ENCODE measurements at regions of chr16 and their contacts with region 1.

Region 1: DNA sequence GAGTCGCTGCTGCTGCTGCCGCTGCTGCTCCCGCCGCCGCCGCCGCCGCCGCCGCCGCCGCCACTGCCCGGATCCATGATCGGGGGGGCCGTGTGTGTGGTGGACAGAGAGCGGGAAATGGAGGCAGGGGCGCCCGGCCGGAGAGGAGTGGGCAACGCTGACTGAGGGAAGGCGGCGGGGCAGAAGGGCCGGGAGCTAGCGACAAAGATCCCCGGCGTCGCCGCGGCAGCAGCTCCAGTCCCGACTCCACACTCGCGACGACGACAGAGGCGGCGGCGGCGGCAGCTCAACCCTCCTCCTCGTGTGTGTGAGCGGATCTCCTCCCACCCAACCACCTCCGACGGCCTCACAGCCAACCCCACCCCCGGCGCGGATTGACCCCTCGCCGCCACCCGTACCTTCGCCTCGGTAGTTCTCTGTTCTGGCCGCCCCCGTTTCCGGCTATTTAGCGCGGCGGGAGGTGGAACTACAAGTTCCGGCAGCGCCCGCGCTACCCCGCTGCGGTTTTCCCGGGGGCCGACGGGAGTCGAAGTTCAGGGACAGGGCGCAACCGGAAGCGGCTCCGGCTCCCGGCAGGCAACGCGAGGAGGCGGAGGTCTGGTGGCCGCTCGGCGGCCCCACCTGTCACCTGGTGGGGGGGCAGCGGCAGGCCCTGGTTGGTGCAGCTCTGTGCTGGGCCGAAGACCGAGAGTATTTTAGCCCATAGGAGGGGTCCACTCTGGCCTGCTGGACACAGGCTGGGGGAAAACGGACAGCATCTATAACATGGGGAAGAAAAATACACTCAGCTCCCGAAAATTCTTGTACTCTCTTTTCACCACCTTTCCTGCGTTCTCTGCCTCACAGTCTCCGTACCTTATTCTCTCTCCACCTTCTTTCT is at the start of gene GSPT1:
- DNase-seq: peak; percentile 99
- ATAC-seq: peak; percentile 98
- total RNA-seq, gene GSPT1: 87.5 to 111 TPM

Region 2: GRCh38 chr16:11459722-11460121 is 456.2 kb before region 1 on chr16:
- intact Hi-C with region 1: no loop called
- DNase-seq: no peak
- ATAC-seq: no peak

Region 3: GRCh38 chr16:11783319-11784037 is 132.4 kb before region 1 on chr16:
- intact Hi-C with region 1: no loop called
- DNase-seq: no peak
- ATAC-seq: peak; percentile 39 to 54

Region 4: GRCh38 chr16:11851294-11852091 is 64.4 kb before region 1 on chr16 and contains the start of gene RSL1D1:
- intact Hi-C with region 1: loop called in 1 of 2 experiments (anchors 10 kb)
- DNase-seq: peak; percentile 92
- ATAC-seq: peak; percentile 99 to 100
- total RNA-seq, gene RSL1D1: 98.4 to 113 TPM

Region 5: DNA sequence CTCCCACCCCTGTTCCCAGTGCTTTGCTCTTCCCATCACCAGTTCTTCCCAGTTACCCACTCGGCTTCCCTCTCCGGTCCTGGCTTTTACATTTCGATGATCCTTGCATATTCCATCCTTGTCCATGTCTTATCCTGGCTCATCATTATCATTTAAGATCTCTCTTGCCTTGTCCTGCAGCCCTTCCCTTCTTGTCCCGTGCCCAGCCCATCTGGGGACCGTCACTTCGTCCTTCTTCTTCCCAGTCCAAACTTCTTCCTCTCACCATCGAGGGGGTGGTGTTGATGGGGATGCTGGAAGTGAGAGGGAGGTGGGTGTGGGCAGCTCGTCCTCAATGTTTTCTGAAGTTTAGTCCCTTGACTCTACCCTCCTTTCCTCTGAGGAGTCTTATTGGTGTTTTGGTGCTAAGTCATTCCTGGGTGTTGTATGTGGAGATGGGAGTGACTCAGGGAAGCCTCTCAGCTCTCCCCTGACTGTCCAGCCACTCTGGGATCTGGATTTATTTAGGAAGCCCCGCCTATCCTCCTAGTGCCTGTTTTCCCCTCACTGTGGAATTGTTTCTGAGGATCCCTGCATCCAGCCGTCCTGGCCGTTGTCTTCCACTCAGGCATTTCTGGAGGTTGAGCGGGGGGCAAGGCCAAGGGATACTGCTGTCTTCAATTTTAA is 61.6 kb after region 1 on chr16:
- intact Hi-C with region 1: loop called in 1 of 2 experiments (anchors 5 kb)
- DNase-seq: peak; percentile 24
- ATAC-seq: peak; percentile 60 to 82